ENCODE measurements at regions of chr1 and their contacts with region 1.

Region 1: DNA sequence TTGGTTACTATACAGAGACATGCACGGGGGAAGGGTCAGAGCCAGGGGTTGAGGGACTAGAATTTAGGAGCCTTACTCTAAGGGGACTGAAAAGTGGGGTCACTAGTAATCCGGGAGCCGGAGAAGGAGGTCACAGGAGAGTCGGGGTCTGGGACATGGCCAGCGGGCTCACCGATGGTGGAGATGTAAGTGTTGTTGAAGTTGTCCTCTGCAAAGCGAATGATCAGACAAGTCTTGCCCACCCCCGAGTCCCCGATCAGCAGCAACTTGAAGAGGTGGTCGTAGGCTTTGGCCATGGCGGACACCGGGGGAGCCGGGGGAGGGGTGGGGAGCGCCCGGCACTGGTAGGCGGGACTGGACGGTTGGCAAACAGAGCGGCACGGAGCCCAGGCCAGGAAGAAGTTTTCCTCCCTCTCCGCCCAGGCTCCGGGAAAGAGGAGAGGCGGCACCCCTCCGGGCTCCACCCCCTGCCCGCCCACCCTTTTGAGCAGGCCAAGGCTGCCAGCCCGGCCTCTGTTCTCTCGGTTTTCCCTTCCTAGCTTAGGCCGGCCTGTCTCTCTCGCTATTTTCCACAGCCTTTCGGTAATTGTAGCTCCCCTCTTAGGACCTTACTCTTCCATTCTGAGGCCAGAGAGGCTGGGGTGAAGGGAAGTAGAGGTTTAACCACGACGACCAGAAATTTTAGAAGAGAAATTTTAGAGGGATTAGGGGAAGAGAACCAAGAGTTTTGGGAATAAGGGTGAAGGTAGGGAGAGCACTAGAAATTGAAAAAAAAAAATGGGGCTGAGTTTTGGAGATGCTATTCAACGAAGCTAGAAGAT is at the start of gene RAB13:
- DNase-seq: peak; percentile 93
- H3K4me3 ChIP-seq: peak within 1 kb of the TSS; percentile 47
- H3K27ac ChIP-seq: peak within 1 kb of the TSS; percentile 63
- H3K4me1 ChIP-seq: peaks cover 7% of the 10 kb centered on the region
- H3K27me3 ChIP-seq: no peaks in the 10 kb centered on the region
- CTCF ChIP-seq: no peak
- total RNA-seq, gene RAB13: 62.7 to 84.7 TPM

Region 2: GRCh38 chr1:153670859-153671627 is 315.1 kb before region 1 on chr1 and contains the start of gene ILF2:
- intact Hi-C with region 1: loop called (anchors 10 kb)
- DNase-seq: peak; percentile 98
- H3K4me3 ChIP-seq: peak within 1 kb of the TSS; percentile 93
- H3K27ac ChIP-seq: peak within 1 kb of the TSS; percentile 81
- H3K4me1 ChIP-seq: peaks cover 9% of the 10 kb centered on the region
- H3K27me3 ChIP-seq: no peaks in the 10 kb centered on the region
- CTCF ChIP-seq: no peak
- total RNA-seq, gene ILF2: 105 to 171 TPM

Region 3: DNA sequence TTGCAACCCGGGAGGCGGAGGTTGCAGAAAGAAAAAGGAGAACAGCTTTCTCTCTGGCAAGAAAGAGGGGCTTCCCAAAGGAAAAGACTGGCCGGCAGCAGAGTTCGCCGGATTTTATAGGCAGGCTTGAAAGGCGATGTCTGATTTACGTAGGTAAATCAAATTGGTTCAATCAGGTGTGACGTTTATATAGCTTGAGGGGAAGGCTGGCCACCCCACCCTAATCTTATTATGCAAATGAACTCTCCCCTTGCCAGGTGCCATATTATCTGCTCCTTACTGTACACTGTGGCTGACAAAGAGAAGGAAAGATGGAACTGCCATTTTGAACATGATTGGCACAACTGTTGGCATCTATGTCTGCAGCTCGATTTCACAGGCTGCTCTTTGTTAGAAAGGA is 275.1 kb before region 1 on chr1:
- intact Hi-C with region 1: no loop called
- DNase-seq: no peak
- H3K4me3 ChIP-seq: no peak overlapping the region
- H3K27ac ChIP-seq: no peak overlapping the region
- H3K4me1 ChIP-seq: no peaks in the 10 kb centered on the region
- H3K27me3 ChIP-seq: no peaks in the 10 kb centered on the region
- CTCF ChIP-seq: no peak

Region 4: DNA sequence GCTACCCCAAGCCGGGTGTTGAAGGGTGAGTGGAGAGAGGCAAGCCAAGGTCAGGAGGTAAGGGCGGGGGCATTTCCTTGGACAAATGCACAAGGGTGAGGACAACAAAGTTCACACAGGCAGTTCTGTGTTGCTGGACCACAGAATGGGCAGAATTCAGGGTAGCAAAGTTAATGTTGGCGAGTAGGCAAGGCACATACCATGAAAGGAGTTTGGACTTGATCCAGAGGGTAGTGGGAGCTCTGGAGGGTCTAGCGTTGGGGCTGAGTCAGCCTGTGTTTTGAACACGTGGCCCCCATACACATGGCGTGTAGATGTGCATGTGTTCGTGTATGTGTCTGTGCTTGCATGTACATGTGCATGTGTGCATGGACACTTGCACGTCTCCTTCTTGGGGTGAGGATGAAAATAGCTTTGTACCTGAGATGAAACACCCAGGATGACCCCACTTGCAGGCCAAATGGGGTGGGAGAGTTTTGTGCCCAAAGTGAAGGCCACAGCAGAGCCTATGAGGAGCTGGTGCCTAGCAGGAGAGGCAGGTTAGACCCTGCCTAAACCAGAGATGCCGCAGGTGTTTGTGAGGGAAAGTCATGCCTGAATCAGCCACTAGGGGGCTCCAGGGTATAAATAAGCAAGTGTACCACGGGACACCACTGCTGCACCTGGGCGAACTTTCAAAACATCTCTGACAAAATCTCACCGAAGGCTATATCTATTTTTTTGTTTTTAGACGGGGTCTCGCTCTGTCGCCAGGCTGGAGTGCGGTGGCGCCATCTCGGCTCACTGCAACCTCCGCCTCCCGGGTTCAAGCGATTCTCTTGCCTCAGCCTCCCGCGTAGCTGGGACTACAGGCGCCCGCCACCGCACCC is 189.1 kb before region 1 on chr1:
- intact Hi-C with region 1: loop called (anchors 2 kb)
- DNase-seq: peak; percentile 92
- H3K4me3 ChIP-seq: no peak overlapping the region
- H3K27ac ChIP-seq: no peak overlapping the region
- H3K4me1 ChIP-seq: no peaks in the 10 kb centered on the region
- H3K27me3 ChIP-seq: no peaks in the 10 kb centered on the region
- CTCF ChIP-seq: peak; percentile 81

Region 5: GRCh38 chr1:153827168-153827964 is 158.8 kb before region 1 on chr1:
- intact Hi-C with region 1: loop called (anchors 5 kb)
- DNase-seq: no peak
- H3K4me3 ChIP-seq: no peak overlapping the region
- H3K27ac ChIP-seq: no peak overlapping the region
- H3K4me1 ChIP-seq: no peaks in the 10 kb centered on the region
- H3K27me3 ChIP-seq: no peaks in the 10 kb centered on the region
- CTCF ChIP-seq: no peak

Region 6: DNA sequence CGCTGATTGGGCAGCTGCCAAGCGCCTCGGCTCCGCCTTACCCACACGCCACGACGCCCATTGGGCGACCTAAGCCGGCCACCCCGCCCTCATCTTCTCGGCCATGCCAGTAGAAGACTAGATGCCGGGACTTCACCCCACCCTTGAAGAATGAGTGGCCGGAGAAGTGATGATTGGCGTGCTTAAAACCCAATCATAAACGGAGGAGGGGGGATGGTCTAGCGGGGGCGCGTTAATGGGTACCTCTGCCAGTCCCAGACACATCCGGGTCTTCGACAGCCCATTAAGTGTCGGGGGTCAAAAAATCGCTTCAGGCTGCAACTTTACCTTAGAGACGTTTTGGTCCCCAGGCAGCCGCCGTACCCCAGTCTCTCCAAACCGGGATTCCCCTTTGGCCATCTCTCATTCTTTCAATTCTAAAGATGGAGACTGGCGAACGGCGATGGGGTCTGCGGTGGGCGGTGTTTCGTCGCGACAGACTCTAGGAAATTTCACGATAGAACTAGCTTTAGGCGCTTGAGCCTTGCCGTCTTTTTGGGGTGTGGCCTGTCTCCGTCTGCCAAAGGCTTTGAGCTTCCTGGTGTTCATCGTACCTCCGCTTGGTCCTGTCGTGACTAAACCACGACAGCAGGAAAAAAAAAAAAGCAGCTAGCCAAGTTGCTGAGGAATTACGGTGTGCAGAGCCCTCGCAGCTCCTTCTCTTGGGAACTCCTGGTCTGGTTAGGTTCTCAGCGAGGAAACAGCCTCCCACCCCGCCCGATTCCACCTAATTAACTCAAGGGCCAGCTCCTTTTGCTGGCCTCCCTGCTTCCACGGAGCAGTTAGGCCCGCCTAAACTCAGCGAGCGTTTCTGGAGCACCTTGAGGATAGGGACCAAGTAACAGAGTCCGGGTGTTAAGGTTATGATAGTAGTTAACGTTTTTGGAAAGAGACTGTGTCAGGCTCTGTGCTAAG is 62.9 kb before region 1 on chr1 and contains the start of gene GATAD2B:
- intact Hi-C with region 1: loop called (anchors 5 kb)
- DNase-seq: peak; percentile 99
- H3K4me3 ChIP-seq: peak within 1 kb of the TSS; percentile 67
- H3K27ac ChIP-seq: peak within 1 kb of the TSS; percentile 81
- H3K4me1 ChIP-seq: peaks cover 16% of the 10 kb centered on the region
- H3K27me3 ChIP-seq: no peaks in the 10 kb centered on the region
- CTCF ChIP-seq: no peak
- total RNA-seq, gene GATAD2B: 32.5 to 36.5 TPM